ENCODE measurements at regions of chr12 and their contacts with region 1.

Region 1: DNA sequence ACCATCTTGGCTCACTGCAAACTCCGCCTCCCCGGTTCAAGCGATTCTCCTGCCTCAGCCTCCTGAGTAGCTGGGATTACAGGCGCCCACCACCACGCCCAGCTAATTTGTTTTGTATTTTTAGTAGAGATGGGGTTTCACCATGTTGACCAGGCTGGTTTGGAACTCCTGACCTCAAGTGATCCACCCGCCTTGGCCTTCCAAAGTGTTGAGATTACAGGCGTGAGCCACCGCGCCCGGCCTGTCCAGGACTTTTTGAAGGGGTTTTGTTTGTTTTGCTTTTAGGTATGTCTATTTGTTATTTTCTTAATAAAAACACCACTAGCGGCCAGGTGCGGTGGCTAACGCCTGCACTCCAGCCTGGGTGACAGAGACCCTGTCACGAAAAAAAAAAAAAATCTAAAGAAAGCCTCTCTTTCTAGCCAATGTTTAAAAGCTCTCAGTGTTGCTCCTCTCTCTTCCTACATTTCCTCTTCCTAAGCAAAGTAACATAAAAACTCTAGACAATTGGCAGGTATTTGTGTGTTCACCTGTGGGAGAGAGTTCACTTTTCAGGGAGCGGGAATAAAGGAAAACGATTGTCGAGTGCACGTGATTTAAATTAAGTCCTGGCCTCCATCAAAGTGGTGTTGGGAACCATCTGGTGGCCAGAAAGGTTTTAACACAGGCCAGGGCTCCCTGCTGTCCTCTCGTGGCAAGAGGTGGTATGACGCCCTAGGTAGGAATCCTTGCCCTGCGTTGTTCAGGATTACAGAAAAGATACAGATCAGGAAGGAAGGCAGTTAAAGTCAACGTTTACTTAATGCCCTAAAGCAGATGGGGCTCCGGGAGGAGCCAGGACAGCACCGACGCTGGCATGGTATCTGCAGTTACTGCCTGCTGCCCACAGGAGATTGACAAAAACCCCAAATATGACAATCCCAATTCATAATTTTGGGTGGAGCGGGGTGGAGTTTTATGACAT is 36.2 kb upstream of the ATP23 start:
- DNase-seq: peak; percentile 85 to 90 (median 86)
- H3K4me3 ChIP-seq: peak overlapping the region in 3 of 7 experiments; percentile 12 to 60 (median 20)
- H3K27ac ChIP-seq: no peak overlapping the region
- H3K4me1 ChIP-seq: peaks cover 2 to 8% (median 7%) of the 10 kb centered on the region in 4 experiments
- H3K27me3 ChIP-seq: no peaks in the 10 kb centered on the region

Region 2: GRCh38 chr12:57744777-57745484 is 160.2 kb before region 1 on chr12 and contains the start of gene TSPAN31:
- CTCF ChIA-PET with region 1: no interaction called
- POLR2A ChIA-PET with region 1: no interaction called
- DNase-seq: peak; percentile 99
- H3K4me3 ChIP-seq: peak within 1 kb of the TSS; percentile 79 to 99 (median 86)
- H3K27ac ChIP-seq: peak within 1 kb of the TSS; percentile 95 to 98
- H3K4me1 ChIP-seq: peaks cover 18 to 48% (median 42%) of the 10 kb centered on the region in 4 experiments
- H3K27me3 ChIP-seq: no peaks in the 10 kb centered on the region

Region 3: GRCh38 chr12:57803319-57803893 is 101.7 kb before region 1 on chr12:
- CTCF ChIA-PET with region 1: interaction called, 42 read pairs
- POLR2A ChIA-PET with region 1: no interaction called
- DNase-seq: peak; percentile 14 to 36 (median 21)
- H3K4me3 ChIP-seq: no peak overlapping the region
- H3K27ac ChIP-seq: no peak overlapping the region
- H3K4me1 ChIP-seq: no peaks in the 10 kb centered on the region
- H3K27me3 ChIP-seq: no peaks in the 10 kb centered on the region

Region 4: GRCh38 chr12:57822392-57823130 is 82.6 kb before region 1 on chr12:
- CTCF ChIA-PET with region 1: interaction called, 24 read pairs
- POLR2A ChIA-PET with region 1: no interaction called
- DNase-seq: no peak
- H3K4me3 ChIP-seq: no peak overlapping the region
- H3K27ac ChIP-seq: no peak overlapping the region
- H3K4me1 ChIP-seq: peaks cover 0 to 2% (median 0%) of the 10 kb centered on the region in 4 experiments
- H3K27me3 ChIP-seq: no peaks in the 10 kb centered on the region

Region 5: DNA sequence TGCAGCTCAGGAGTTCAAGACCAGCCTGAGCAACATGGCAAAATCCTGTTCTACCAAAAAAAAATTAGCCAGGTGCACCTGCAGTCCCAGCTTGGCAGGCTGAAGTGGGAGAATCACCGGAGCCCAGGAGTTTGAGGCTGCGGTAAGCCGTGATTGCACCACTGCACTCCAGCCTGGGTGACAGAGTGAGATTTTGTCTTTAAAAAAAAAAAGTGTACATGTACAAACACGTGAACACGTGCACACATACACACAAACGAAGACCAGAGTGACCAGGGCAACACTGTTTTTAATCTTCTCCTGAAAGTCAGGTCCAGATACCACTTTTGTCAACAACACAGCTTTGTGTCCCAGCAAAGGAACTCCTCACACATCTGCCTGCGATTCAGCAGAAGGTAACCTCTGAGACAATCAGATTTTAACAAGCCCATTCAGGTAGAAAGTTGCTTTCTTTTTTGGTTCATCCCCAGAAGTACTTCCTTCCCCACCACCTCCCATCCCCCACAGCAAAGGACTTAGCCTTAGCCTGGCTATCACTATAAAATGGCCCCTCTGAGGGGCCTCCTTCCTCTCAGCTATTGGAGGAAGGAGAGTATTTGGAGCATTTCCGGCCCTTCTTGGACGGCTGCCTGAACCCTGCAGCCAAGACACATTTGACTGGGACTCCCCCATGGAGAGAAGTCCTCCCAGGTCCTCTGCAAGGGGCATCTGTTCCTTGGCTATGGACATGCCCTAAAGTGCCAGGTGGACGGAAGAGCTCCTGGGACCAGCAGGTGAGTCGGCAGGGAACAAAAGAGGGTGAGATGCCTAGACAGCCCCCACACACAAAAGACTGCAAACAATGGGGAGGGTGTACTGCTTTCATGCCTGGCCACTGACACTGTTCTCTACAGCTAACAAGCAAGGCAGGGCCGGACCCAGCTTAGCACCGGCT is 68.4 kb before region 1 on chr12:
- CTCF ChIA-PET with region 1: interaction called, 313 read pairs
- POLR2A ChIA-PET with region 1: no interaction called
- DNase-seq: peak; percentile 49 to 82 (median 81)
- H3K4me3 ChIP-seq: peak overlapping the region in 6 of 7 experiments; percentile 15 to 66 (median 53)
- H3K27ac ChIP-seq: peak overlapping the region in 1 of 2 experiments; percentile 61
- H3K4me1 ChIP-seq: peaks cover 39 to 99% (median 96%) of the 10 kb centered on the region in 4 experiments
- H3K27me3 ChIP-seq: no peaks in the 10 kb centered on the region

Region 6: DNA sequence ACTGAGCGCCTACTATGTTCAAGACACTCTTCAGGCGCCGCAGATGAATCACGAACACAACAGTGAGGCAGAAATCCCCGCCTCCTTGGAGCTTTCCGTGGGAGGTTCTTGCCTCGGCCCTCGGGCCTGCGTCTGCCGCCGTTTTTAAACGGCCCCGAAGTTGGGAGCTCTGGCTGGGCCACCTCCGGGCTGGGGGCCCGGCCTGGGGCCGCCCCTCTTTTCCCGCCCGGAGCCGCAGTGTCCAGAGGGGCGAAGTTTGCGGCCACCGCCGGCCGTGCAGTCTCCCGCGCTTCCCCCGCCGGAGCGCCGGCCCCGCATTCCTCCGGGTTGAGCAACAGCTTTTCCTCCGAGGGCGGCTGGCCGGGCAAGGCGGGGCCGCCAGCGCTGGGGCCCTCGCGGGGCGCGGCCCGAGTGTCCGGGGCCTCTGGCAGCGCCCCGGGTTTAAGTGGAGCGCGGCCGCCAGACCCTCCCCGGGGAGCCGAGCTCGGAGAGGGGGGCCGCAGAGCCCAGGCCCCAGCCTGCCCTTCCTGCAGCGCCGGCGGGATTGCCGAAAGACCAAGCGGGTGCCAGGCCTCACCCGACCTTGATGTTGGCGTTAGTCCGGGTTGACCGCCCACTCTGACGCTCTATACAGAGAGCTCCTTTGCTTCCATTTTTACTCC is 39.9 kb before region 1 on chr12:
- CTCF ChIA-PET with region 1: interaction called, 24 read pairs
- POLR2A ChIA-PET with region 1: no interaction called
- DNase-seq: peak in 2 of 3 donors; percentile 50 to 63
- H3K4me3 ChIP-seq: peak overlapping the region; percentile 23 to 76 (median 57)
- H3K27ac ChIP-seq: peak overlapping the region in 1 of 2 experiments; percentile 46
- H3K4me1 ChIP-seq: peaks cover 0 to 10% (median 6%) of the 10 kb centered on the region in 4 experiments
- H3K27me3 ChIP-seq: peaks cover 0 to 3% (median 0%) of the 10 kb centered on the region in 5 experiments